ENCODE measurements at regions of chr2 and their contacts with region 1.

Region 1: GRCh38 chr2:64698668-64699444 is 45.1 kb upstream of the SERTAD2 start:
- DNase-seq: peak; percentile 82
- H3K4me3 ChIP-seq: no peak overlapping the region
- H3K27ac ChIP-seq: peak overlapping the region; percentile 79
- H3K4me1 ChIP-seq: peaks cover 28% of the 10 kb centered on the region
- H3K27me3 ChIP-seq: no peaks in the 10 kb centered on the region
- CTCF ChIP-seq: no peak
- POLR2A ChIP-seq: no peak

Region 2: GRCh38 chr2:64653349-64654062 is 45.4 kb before region 1 on chr2 and contains the start of gene SERTAD2:
- CTCF ChIA-PET with region 1: interaction called, 6 read pairs
- POLR2A ChIA-PET with region 1: interaction called, 5 read pairs
- dilution Hi-C with region 1: no loop called
- intact Hi-C with region 1: loop called (anchors 1 kb)
- DNase-seq: peak; percentile 87
- H3K4me3 ChIP-seq: peak within 1 kb of the TSS; percentile 72 to 89 (median 83)
- H3K27ac ChIP-seq: peak within 1 kb of the TSS; percentile 91
- H3K4me1 ChIP-seq: peaks cover 21% of the 10 kb centered on the region
- H3K27me3 ChIP-seq: no peaks in the 10 kb centered on the region
- CTCF ChIP-seq: peak in 1 of 2 donors; percentile 14
- POLR2A ChIP-seq: peak; percentile 63
- total RNA-seq, gene SERTAD2: 11.2 and 12.0 TPM in 2 replicates

Region 3: DNA sequence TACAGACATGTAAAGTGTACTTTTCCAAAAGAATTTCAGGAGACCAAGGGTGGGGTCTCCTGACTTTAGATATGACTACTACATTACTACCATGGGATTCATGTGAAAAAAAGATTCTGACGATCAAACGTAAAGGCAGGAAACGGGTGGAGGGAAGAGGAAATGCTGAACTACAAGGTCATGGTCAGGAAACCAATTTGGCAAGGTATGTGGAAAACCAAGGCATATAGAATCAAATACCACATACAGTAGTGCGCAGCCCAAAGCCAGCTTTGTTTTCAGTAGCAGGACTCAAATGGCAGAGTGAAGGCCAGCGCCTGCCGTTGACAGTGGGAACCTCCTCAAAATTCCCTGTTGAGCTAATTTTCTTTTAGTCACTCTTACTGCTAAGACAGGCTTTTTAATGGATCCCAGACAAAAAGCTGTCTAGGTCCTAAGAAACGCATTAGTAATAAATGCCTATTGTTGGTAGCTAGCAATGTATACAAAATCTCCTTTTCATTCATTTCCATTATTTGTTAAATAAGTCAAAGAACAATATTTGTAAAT is 12.5 kb after region 1 on chr2:
- CTCF ChIA-PET with region 1: interaction called, 13 read pairs
- POLR2A ChIA-PET with region 1: no interaction called
- dilution Hi-C with region 1: no loop called
- intact Hi-C with region 1: loop called (anchors 1 kb)
- DNase-seq: peak; percentile 95
- H3K4me3 ChIP-seq: no peak overlapping the region
- H3K27ac ChIP-seq: peak overlapping the region; percentile 54
- H3K4me1 ChIP-seq: peaks cover 12% of the 10 kb centered on the region
- H3K27me3 ChIP-seq: no peaks in the 10 kb centered on the region
- CTCF ChIP-seq: peak in 1 of 2 donors; percentile 7
- POLR2A ChIP-seq: peak; percentile 27

Region 4: GRCh38 chr2:64730551-64731262 is 31.9 kb after region 1 on chr2:
- CTCF ChIA-PET with region 1: no interaction called
- POLR2A ChIA-PET with region 1: no interaction called
- dilution Hi-C with region 1: no loop called
- intact Hi-C with region 1: loop called (anchors 2 kb)
- DNase-seq: peak; percentile 92
- H3K4me3 ChIP-seq: peak overlapping the region; percentile 29 to 76 (median 53)
- H3K27ac ChIP-seq: peak overlapping the region; percentile 64
- H3K4me1 ChIP-seq: peaks cover 13% of the 10 kb centered on the region
- H3K27me3 ChIP-seq: no peaks in the 10 kb centered on the region
- CTCF ChIP-seq: no peak
- POLR2A ChIP-seq: peak; percentile 39

Region 5: DNA sequence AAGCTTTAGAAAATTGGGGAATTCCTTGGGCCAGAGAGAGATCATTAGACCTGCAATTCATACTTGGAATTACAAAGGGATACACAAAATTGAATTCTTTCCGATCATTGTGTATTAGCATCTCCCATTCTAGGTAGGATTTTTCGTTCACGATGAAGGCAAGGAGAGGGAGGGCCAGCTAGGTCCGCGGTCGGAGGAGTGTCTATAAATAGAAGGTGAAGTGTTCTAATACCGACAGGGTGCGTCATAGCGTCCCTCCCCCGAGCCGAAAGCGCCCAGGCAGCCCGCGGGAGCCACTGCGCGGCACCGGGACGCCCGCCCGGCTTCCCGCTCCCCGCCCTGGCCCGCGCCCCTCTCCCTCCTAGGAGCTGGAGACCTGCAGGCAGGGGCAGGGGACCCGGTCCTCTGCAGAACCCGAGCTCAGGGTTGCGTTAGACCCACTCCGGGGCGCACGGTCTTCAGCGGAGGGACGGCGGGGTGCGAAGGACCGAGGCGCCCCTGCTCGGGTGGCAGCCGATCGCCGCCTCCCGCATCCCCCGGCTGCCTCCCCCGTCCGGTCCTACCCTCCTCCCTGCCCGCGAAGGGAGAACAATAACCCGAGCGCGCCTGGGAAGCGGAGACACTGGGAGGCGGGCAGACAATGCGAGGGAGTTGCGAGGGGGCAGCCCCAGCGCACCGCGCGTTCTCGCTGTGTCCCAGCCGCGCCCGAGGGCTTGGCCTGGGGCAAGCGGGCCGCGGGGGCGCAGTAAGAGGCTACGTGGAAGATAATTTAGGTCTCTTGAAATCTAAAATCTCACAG is 69.0 kb after region 1 on chr2:
- CTCF ChIA-PET with region 1: no interaction called
- POLR2A ChIA-PET with region 1: no interaction called
- dilution Hi-C with region 1: no loop called
- intact Hi-C with region 1: loop called (anchors 5 kb)
- DNase-seq: peak; percentile 87
- H3K4me3 ChIP-seq: peak overlapping the region; percentile 57 to 80 (median 75)
- H3K27ac ChIP-seq: peak overlapping the region; percentile 87
- H3K4me1 ChIP-seq: peaks cover 12% of the 10 kb centered on the region
- H3K27me3 ChIP-seq: no peaks in the 10 kb centered on the region
- CTCF ChIP-seq: no peak
- POLR2A ChIP-seq: peak; percentile 76

Region 6: GRCh38 chr2:64779117-64779690 is 80.3 kb after region 1 on chr2:
- CTCF ChIA-PET with region 1: no interaction called
- POLR2A ChIA-PET with region 1: no interaction called
- dilution Hi-C with region 1: no loop called
- intact Hi-C with region 1: loop called (anchors 1 kb)
- DNase-seq: peak; percentile 88
- H3K4me3 ChIP-seq: no peak overlapping the region
- H3K27ac ChIP-seq: peak overlapping the region; percentile 85
- H3K4me1 ChIP-seq: peaks cover 29% of the 10 kb centered on the region
- H3K27me3 ChIP-seq: no peaks in the 10 kb centered on the region
- CTCF ChIP-seq: no peak
- POLR2A ChIP-seq: no peak

Region 7: DNA sequence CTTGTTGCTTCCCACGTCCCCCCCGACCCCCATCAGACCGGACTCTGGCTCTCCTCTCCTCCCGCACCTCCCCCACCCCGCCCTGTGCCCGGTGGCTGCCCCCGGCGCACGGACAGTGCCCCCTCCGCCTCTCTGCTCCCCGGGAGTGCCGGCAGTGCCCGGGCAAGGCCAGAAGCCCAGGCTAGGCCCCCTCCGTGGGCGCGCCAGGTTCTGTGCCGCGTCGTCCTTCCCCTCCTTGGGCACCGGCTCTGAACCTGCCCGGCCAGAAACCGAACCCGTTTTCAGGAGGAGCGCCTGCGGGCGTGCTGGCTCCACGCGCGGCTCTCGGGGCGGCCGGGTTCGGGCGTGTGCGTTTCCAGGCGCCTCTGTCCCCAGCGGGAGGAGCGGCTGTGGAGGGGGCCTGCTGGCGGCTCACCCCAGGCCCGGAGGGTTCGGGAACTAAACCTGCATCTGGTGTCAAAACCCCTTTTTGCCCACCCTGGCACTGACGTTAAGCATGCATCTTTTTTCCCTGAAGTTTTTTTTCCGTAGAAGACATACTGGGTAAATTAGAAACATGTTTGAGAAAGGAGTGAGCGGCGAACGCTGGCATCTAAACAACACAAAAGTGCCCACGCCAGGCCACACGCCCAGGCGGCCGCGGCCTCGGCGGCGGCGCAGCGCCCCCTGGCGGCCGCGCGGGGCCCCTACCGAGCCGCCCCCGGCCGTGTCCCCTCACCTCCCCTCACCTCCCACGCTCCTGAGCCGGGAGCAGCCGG is 166.4 kb after region 1 on chr2:
- CTCF ChIA-PET with region 1: no interaction called
- POLR2A ChIA-PET with region 1: no interaction called
- dilution Hi-C with region 1: no loop called
- intact Hi-C with region 1: loop called (anchors 5 kb)
- DNase-seq: peak; percentile 71
- H3K4me3 ChIP-seq: peak overlapping the region; percentile 42 to 46 (median 44)
- H3K27ac ChIP-seq: peak overlapping the region; percentile 66
- H3K4me1 ChIP-seq: peaks cover 6% of the 10 kb centered on the region
- H3K27me3 ChIP-seq: no peaks in the 10 kb centered on the region
- CTCF ChIP-seq: peak; percentile 43 to 94
- POLR2A ChIP-seq: no peak

Region 8: GRCh38 chr2:65142515-65142914 is 443.7 kb after region 1 on chr2:
- CTCF ChIA-PET with region 1: no interaction called
- POLR2A ChIA-PET with region 1: no interaction called
- dilution Hi-C with region 1: no loop called
- intact Hi-C with region 1: no loop called
- DNase-seq: no peak
- H3K4me3 ChIP-seq: no peak overlapping the region
- H3K27ac ChIP-seq: no peak overlapping the region
- H3K4me1 ChIP-seq: no peaks in the 10 kb centered on the region
- H3K27me3 ChIP-seq: peaks cover 2 to 9% of the 10 kb centered on the region in 2 experiments
- CTCF ChIP-seq: peak in 1 of 2 donors; percentile 4
- POLR2A ChIP-seq: no peak